ENCODE measurements at regions of chr20 and their contacts with region 1.

Region 1: DNA sequence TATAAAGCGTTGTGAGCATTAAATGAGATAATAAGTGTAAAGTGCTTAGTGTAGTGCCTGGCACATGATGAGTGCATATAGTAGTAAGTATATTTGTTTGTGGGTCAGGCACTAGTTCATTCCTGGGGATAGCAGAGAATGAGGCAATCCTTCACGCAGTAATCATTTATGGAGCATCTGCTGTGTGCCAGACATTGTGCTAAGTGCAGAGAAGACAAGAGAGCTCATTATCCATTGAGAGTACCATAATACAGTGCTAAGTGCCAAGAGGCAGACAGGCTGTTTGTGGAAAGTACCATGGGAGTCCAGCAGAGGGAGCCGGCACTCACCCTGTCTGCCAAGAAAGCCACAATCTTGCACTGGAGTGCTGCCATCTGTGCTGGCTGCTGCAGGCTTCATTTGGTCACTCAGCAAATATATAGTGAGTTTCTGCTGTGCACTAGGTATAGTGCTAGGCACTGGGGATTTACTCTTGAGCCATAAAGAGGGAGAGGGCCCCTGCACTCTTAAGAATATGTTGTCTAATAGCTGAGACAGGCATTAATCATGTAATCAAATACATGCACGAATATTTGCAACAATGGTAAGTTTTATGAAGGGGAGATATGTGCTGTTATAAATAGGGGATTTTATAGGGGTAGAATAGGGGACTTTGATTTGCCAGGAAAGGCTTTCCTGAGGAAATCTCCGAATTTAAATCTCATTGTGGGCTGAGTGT is 12.9 kb upstream of the MROH8 start:
- DNase-seq: peak; percentile 78
- H3K4me3 Mint-ChIP-seq: no peak overlapping the region
- H3K27ac Mint-ChIP-seq: peak overlapping the region; percentile 41
- H3K4me1 Mint-ChIP-seq: peaks cover 75% of the 10 kb centered on the region
- H3K27me3 Mint-ChIP-seq: no peaks in the 10 kb centered on the region

Region 2: GRCh38 chr20:37095599-37096414 is 96.5 kb before region 1 on chr20 and contains the start of gene RBL1:
- CTCF ChIA-PET with region 1: no interaction called
- POLR2A ChIA-PET with region 1: no interaction called
- DNase-seq: peak; percentile 90
- H3K4me3 Mint-ChIP-seq: peak within 1 kb of the TSS; percentile 99
- H3K27ac Mint-ChIP-seq: peak within 1 kb of the TSS; percentile 100
- H3K4me1 Mint-ChIP-seq: peaks cover 46% of the 10 kb centered on the region
- H3K27me3 Mint-ChIP-seq: no peaks in the 10 kb centered on the region
- total RNA-seq, gene RBL1: 48.9 to 53.9 TPM

Region 3: GRCh38 chr20:37178839-37179670 is 13.2 kb before region 1 on chr20 and contains the starts of genes MROH8 and RPN2:
- CTCF ChIA-PET with region 1: interaction called, 43 read pairs
- POLR2A ChIA-PET with region 1: interaction called, 4 read pairs
- DNase-seq: peak; percentile 97
- H3K4me3 Mint-ChIP-seq: peak within 1 kb of the TSS; percentile 99
- H3K27ac Mint-ChIP-seq: peak within 1 kb of the TSS; percentile 100
- H3K4me1 Mint-ChIP-seq: peaks cover 37% of the 10 kb centered on the region
- H3K27me3 Mint-ChIP-seq: peaks cover 2% of the 10 kb centered on the region
- total RNA-seq, gene MROH8: 2.5 to 3.0 TPM
- total RNA-seq, gene RPN2: 154 to 176 TPM

Region 4: DNA sequence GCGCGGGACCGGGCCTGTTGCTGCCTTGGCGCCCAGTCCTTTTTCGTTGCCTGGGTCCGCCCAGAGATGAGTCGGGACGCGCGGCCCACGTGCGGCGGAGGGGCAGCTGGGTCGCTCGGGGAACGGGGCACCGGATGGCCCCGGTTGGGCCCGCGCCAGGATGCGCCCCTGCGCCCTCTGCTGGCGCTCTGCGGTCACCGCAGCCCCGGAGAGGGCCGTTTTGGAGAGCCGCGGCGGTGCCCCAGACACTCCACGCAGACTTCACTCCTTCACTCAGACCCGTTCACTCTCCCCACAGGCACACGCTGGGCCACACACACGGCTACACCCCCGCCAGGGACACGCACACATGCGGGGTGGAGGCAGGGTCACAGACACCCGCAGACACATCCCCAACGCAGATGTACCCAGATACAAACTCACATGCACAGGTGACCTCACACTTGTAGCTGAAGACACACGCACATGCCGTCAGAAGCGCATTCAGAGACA is 192.4 kb after region 1 on chr20:
- CTCF ChIA-PET with region 1: interaction called, 17 read pairs
- POLR2A ChIA-PET with region 1: no interaction called
- DNase-seq: peak; percentile 74
- H3K4me3 Mint-ChIP-seq: peak overlapping the region; percentile 46
- H3K27ac Mint-ChIP-seq: peak overlapping the region; percentile 86
- H3K4me1 Mint-ChIP-seq: peaks cover 4% of the 10 kb centered on the region
- H3K27me3 Mint-ChIP-seq: peaks cover 2% of the 10 kb centered on the region

Measured in activated CD4-positive, alpha-beta T cell treated with anti-CD3 and anti-CD28 coated beads, Interleukin-2, amount 10 ng/mL, durations not matched to agents 7 days and 5 days (primary cell).